ENCODE measurements at regions of chr1 and their contacts with region 1.

Region 1: DNA sequence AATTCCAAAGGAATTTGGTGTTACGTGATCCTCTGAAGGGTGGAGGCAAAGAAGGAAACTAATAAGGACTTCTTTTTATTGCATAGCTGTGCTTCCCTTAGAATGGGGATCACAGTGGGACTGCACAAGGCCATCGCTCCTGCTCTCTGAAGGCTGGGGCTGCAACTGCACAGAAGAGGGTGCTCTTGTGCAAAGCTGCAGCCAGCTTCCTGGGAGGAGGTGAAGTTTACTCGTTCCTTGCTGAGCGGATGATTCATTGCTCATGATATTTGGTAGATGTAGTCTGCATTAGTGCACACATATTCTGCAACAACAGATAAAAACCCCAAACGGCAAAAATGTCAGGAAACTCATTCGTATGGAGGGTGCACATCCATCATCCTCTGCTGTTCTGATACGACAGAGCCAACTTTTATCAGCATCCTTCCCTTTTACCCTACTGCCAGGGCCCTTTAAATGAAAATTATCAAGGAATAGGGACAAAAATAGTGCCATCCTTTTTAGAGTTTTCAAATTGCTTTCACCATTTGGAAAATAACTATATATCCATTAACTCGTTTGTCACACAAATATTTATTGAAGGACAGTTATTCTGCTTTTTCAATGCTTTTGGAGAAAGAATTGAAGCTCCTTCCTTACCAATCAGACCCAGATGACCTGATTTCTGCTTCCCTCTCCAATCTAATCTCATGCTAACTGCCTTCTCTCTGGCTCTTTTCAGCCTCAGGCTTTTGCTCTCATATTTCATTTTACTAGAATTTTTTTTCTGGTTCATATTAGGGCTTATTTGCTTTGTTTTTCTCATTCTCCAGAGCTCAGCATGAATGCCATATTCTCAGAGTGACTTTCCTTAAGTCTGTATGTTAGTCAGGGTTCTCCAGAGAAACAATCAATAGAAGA is 263.6 kb downstream of the DUSP10 start:
- DNase-seq: peak; percentile 7 to 46 (median 31)
- ATAC-seq: peak; percentile 82
- H3K4me3 ChIP-seq: no peak overlapping the region
- H3K4me3 Mint-ChIP-seq: no peak overlapping the region
- H3K27ac ChIP-seq: no peak overlapping the region
- H3K27ac Mint-ChIP-seq: no peak overlapping the region
- H3K4me1 ChIP-seq: no peaks in the 10 kb centered on the region
- H3K4me1 Mint-ChIP-seq: peaks cover 0 to 5% (median 0%) of the 10 kb centered on the region in 7 donors
- H3K27me3 ChIP-seq: no peaks in the 10 kb centered on the region
- H3K27me3 Mint-ChIP-seq: peaks cover 0 to 15% (median 4%) of the 10 kb centered on the region in 5 donors

Region 2: GRCh38 chr1:220791285-220791684 is 687.0 kb before region 1 on chr1:
- CTCF ChIA-PET with region 1: no interaction called
- POLR2A ChIA-PET with region 1: no interaction called
- intact Hi-C with region 1: no loop called
- DNase-seq: no peak
- ATAC-seq: no peak
- H3K4me3 ChIP-seq: no peak overlapping the region
- H3K4me3 Mint-ChIP-seq: no peak overlapping the region
- H3K27ac ChIP-seq: no peak overlapping the region
- H3K27ac Mint-ChIP-seq: no peak overlapping the region
- H3K4me1 ChIP-seq: no peaks in the 10 kb centered on the region
- H3K4me1 Mint-ChIP-seq: peaks cover 0 to 5% (median 0%) of the 10 kb centered on the region in 7 donors
- H3K27me3 ChIP-seq: no peaks in the 10 kb centered on the region
- H3K27me3 Mint-ChIP-seq: peaks cover 11 to 49% (median 16%) of the 10 kb centered on the region in 5 donors

Region 3: GRCh38 chr1:221856224-221857093 is 378.2 kb after region 1 on chr1:
- CTCF ChIA-PET with region 1: interaction called, 3 read pairs
- POLR2A ChIA-PET with region 1: no interaction called
- intact Hi-C with region 1: loop called in 1 of 2 experiments (anchors 1 kb)
- DNase-seq: no peak
- ATAC-seq: no peak
- H3K4me3 ChIP-seq: no peak overlapping the region
- H3K4me3 Mint-ChIP-seq: no peak overlapping the region
- H3K27ac ChIP-seq: no peak overlapping the region
- H3K27ac Mint-ChIP-seq: no peak overlapping the region
- H3K4me1 ChIP-seq: no peaks in the 10 kb centered on the region
- H3K4me1 Mint-ChIP-seq: peaks cover 0 to 2% (median 0%) of the 10 kb centered on the region in 7 donors
- H3K27me3 ChIP-seq: no peaks in the 10 kb centered on the region
- H3K27me3 Mint-ChIP-seq: no peaks in the 10 kb centered on the region

Region 4: GRCh38 chr1:221979461-221980032 is 501.2 kb after region 1 on chr1:
- CTCF ChIA-PET with region 1: no interaction called
- POLR2A ChIA-PET with region 1: no interaction called
- intact Hi-C with region 1: loop called in 1 of 2 experiments (anchors 1 kb)
- DNase-seq: no peak
- ATAC-seq: no peak
- H3K4me3 ChIP-seq: no peak overlapping the region
- H3K4me3 Mint-ChIP-seq: no peak overlapping the region
- H3K27ac ChIP-seq: no peak overlapping the region
- H3K27ac Mint-ChIP-seq: no peak overlapping the region
- H3K4me1 ChIP-seq: no peaks in the 10 kb centered on the region
- H3K4me1 Mint-ChIP-seq: no peaks in the 10 kb centered on the region
- H3K27me3 ChIP-seq: no peaks in the 10 kb centered on the region
- H3K27me3 Mint-ChIP-seq: peaks cover 7 to 12% (median 9%) of the 10 kb centered on the region in 5 donors

Region 5: GRCh38 chr1:222095606-222096475 is 617.5 kb after region 1 on chr1:
- CTCF ChIA-PET with region 1: no interaction called
- POLR2A ChIA-PET with region 1: no interaction called
- intact Hi-C with region 1: loop called in 1 of 2 experiments (anchors 1 kb)
- DNase-seq: peak; percentile 31 to 71 (median 58)
- ATAC-seq: peak; percentile 85
- H3K4me3 ChIP-seq: no peak overlapping the region
- H3K4me3 Mint-ChIP-seq: no peak overlapping the region
- H3K27ac ChIP-seq: no peak overlapping the region
- H3K27ac Mint-ChIP-seq: no peak overlapping the region
- H3K4me1 ChIP-seq: no peaks in the 10 kb centered on the region
- H3K4me1 Mint-ChIP-seq: no peaks in the 10 kb centered on the region
- H3K27me3 ChIP-seq: no peaks in the 10 kb centered on the region
- H3K27me3 Mint-ChIP-seq: peaks cover 0 to 5% (median 0%) of the 10 kb centered on the region in 5 donors

Region 6: GRCh38 chr1:222634180-222635013 is 1156.1 kb after region 1 on chr1:
- CTCF ChIA-PET with region 1: no interaction called
- POLR2A ChIA-PET with region 1: no interaction called
- intact Hi-C with region 1: loop called in 1 of 2 experiments (anchors 2 kb)
- DNase-seq: peak in 8 of 9 donors; percentile 43 to 83 (median 78)
- ATAC-seq: peak; percentile 96
- H3K4me3 ChIP-seq: no peak overlapping the region
- H3K4me3 Mint-ChIP-seq: no peak overlapping the region
- H3K27ac ChIP-seq: no peak overlapping the region
- H3K27ac Mint-ChIP-seq: peak overlapping the region in 6 of 9 donors; percentile 11 to 82 (median 58)
- H3K4me1 ChIP-seq: no peaks in the 10 kb centered on the region
- H3K4me1 Mint-ChIP-seq: peaks cover 7 to 20% (median 11%) of the 10 kb centered on the region in 7 donors
- H3K27me3 ChIP-seq: no peaks in the 10 kb centered on the region
- H3K27me3 Mint-ChIP-seq: no peaks in the 10 kb centered on the region

Measured in naive thymus-derived CD4-positive, alpha-beta T cell (primary cell).